Prostate gland (tissue), 2 donors: ENCODE measurements at regions of chr11 and their contacts with region 1.

Region 1: DNA sequence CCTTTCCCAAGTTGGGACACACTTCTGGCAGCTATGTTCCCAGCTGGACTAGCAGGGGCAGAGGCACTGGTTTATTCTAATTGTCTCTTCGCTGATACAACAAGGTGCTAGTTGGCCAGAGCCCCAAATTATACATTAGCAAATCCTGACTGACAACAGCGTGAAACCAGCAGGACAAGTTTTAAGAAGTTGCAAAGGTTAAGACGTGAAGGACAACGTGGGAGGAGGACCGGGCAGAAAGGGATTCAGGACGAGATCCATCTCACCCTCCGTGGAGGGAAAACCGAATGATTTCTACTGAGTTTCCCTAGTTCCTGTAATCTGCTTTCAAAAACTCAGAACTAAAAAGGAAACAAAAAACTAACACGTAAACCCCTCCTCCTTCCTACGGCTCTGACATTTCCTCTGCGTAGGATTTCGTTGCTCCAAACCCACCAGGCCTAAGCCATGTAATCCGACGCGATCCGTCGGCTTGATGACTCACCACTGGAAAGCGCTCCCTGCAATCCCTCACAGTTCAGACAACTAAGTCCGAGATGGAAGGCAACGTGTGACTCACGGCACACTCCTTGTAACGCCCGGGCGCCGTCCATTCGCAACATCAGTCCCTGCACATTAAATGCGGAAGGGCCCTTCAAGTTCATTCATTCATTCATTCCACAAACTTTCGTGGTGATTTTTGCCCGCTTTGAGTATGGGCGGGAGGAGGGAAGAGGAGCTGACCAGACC is 703 bp downstream of the POGLUT3 start:
- DNase-seq: peak; percentile 86
- H3K4me3 ChIP-seq: peak overlapping the region; percentile 68 to 74
- H3K27ac ChIP-seq: peak overlapping the region; percentile 95
- H3K4me1 ChIP-seq: no peaks in the 10 kb centered on the region
- H3K27me3 ChIP-seq: no peaks in the 10 kb centered on the region
- CTCF ChIP-seq: no peak
- POLR2A ChIP-seq: peak; percentile 73

Region 2: DNA sequence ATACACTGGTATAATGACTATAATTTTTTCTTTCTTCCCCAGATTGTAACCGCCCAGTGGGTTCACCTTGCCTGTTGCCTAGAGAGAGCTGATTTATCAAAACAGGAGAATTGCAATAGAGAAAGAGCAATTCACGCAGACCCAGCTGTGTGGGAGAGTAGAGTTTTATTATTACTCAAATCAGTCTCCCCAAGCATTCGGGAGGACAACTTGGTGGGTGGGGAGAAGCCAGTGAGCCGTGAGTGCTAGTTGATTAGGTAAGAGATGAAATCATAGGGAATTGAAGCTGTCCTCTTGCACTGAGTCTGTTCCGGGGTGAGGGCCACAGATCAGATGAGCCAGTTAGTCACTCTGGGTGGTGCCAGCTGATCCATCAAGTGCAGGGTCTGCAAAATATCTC is 712.1 kb before region 1 on chr11:
- intact Hi-C with region 1: no loop called
- DNase-seq: no peak
- H3K4me3 ChIP-seq: no peak overlapping the region
- H3K27ac ChIP-seq: no peak overlapping the region
- H3K4me1 ChIP-seq: no peaks in the 10 kb centered on the region
- H3K27me3 ChIP-seq: no peaks in the 10 kb centered on the region
- CTCF ChIP-seq: no peak
- POLR2A ChIP-seq: no peak

Region 3: DNA sequence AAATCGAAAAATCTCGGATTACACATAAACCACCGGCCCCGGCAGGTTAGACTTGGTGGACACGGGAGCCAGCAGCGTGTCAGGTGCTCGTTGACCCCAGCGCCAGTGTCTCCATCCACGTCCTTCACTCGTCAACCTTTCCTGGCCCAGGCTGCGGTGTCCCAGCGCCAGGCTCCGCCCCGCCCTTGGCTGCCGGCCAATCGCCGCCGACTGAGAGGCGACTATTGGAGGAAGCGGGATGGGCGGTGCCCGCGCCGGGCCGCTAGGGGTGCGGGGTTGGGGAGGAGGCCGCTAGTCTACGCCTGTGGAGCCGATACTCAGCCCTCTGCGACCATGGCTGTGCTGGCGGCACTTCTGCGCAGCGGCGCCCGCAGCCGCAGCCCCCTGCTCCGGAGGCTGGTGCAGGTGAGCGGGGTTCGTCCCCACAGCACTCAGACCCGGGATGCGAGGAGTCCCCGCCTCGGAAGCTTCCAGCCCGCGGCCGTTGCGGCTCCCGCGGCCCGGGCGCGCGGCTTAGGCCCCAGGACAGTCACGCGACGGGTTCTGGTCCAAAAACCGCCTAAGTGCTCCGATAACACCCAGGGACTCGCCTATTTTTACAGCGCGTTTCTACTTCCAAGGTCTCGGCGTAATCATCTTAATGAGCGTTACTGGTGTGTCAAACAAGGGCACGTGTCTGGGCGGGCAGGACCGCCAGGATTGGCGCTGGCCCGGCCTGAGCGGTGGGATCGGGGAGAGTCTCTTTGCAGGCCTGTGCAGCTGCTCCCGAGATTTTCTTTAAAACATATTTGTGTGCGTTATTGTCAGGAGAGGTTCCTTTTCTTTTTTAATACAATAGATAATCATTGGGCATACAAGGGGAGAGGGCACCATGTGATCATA is 376.0 kb before region 1 on chr11 and contains the start of gene ACAT1:
- intact Hi-C with region 1: loop called (anchors 10 kb)
- DNase-seq: peak; percentile 94
- H3K4me3 ChIP-seq: peak within 1 kb of the TSS; percentile 69 to 73
- H3K27ac ChIP-seq: peak within 1 kb of the TSS; percentile 87 to 89
- H3K4me1 ChIP-seq: peaks cover 4% of the 10 kb centered on the region
- H3K27me3 ChIP-seq: no peaks in the 10 kb centered on the region
- CTCF ChIP-seq: peak in 3 of 4 experiments; percentile 40 to 76 (median 69)
- POLR2A ChIP-seq: peak; percentile 70
- total RNA-seq, gene ACAT1: 65.1 to 152 TPM

Region 4: GRCh38 chr11:108222686-108223448 is 274.6 kb before region 1 on chr11 and contains the start of gene ATM:
- intact Hi-C with region 1: loop called (anchors 10 kb)
- DNase-seq: peak; percentile 99
- H3K4me3 ChIP-seq: peak within 1 kb of the TSS; percentile 69 to 76
- H3K27ac ChIP-seq: peak within 1 kb of the TSS; percentile 89 to 97
- H3K4me1 ChIP-seq: no peaks in the 10 kb centered on the region
- H3K27me3 ChIP-seq: no peaks in the 10 kb centered on the region
- CTCF ChIP-seq: peak; percentile 58 to 91 (median 77)
- POLR2A ChIP-seq: peak; percentile 6
- total RNA-seq, gene ATM: 32.9 to 80.9 TPM

Region 5: DNA sequence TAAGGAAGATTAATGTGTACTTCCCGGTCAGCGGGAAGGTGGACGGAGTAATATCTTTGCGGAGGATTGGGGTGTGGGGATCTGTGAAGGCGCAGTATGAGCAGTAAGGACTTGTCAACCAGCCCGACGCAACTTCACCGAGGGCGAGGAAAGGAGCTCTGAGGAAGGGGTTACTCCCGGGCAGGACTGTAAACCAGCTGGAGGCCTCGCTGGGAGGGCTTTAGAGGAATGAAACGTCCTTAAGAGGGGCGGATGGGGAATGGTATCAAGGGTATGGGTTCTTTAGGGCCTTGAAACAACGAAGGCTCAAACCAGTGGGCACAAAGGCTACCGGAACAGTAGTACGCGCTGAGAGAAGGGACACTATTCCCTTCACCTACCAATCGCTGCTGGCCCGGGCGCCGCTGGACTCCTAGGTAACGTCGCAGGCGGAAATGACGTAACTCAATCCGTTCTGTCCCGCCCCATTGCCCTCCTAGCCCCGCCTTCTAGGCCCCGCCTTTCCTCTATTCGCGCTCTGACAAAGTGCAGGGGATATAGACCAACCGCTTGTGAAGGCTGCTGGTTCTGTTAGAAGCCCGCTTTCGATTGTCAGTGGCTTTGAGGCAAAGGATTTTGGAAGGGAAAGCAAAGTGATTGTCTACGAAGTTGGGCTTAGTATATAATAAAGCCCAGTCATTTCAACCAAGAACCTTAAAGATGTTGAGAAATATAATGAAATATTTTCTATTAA is 30.2 kb before region 1 on chr11 and contains the start of gene C11orf65:
- intact Hi-C with region 1: loop called (anchors 2 kb)
- DNase-seq: peak; percentile 97
- H3K4me3 ChIP-seq: peak within 1 kb of the TSS; percentile 52 to 65
- H3K27ac ChIP-seq: peak within 1 kb of the TSS; percentile 99
- H3K4me1 ChIP-seq: no peaks in the 10 kb centered on the region
- H3K27me3 ChIP-seq: no peaks in the 10 kb centered on the region
- CTCF ChIP-seq: no peak
- POLR2A ChIP-seq: peak; percentile 98
- total RNA-seq, gene C11orf65: 0.18 to 4.3 TPM

Region 6: DNA sequence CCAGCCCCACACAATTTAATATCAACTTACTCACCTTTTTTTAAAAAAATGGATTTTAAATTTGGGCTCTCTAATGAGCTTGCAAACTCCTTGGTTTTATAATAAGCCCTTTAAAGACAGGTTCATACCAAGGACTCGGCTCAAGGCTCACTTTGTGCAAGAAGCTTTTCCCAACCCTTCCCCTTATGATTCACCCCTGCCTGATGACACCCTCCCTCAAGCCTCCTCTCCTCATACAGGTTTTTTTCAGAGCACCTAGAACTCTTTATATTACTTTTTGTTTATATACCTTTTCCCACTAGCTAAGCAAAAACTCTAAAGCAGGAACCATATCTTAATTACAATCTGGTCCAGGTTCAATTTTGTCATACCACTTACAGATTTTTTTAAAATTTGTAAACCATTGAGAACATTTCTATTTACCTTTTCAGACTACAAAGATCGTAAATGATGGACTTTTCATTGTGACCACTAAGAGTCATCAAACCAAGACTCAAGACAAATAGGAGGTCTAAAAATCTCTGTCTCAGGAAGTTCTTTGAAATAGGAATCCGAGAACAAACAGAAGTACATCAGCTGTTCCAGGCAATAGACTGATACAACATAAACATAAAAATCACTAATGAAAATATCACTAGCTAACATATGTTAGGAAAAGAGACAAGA is 109.1 kb after region 1 on chr11:
- intact Hi-C with region 1: no loop called
- DNase-seq: no peak
- H3K4me3 ChIP-seq: no peak overlapping the region
- H3K27ac ChIP-seq: no peak overlapping the region
- H3K4me1 ChIP-seq: no peaks in the 10 kb centered on the region
- H3K27me3 ChIP-seq: no peaks in the 10 kb centered on the region
- CTCF ChIP-seq: no peak
- POLR2A ChIP-seq: no peak

Region 7: GRCh38 chr11:108664730-108665525 is 167.4 kb after region 1 on chr11 and contains the start of gene DDX10:
- intact Hi-C with region 1: loop called (anchors 10 kb)
- DNase-seq: peak; percentile 97
- H3K4me3 ChIP-seq: peak within 1 kb of the TSS; percentile 80 to 91
- H3K27ac ChIP-seq: peak within 1 kb of the TSS; percentile 59 to 72
- H3K4me1 ChIP-seq: peaks cover 6% of the 10 kb centered on the region
- H3K27me3 ChIP-seq: no peaks in the 10 kb centered on the region
- CTCF ChIP-seq: peak in 2 of 4 experiments; percentile 18 to 28
- POLR2A ChIP-seq: peak; percentile 17
- total RNA-seq, gene DDX10: 18.5 to 33.1 TPM

Region 8: DNA sequence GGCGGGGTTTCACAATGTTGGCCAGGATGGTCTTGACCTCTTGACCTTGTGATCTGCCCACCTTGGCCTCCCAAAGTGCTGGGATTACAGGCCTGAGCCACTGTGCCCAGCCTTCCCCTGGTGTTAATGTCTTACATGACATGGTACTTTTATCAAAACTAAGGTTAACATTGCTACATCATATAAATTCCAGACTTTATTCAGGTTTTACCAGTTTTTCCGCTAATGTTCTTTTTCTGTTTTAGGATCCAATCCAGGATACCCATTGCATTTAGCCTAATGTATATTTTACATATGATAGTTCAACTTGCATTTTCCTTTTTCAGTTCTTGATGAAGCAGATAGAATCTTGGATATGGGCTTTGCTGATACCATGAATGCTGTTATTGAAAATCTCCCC is 181.6 kb after region 1 on chr11:
- intact Hi-C with region 1: no loop called
- DNase-seq: no peak
- H3K4me3 ChIP-seq: no peak overlapping the region
- H3K27ac ChIP-seq: no peak overlapping the region
- H3K4me1 ChIP-seq: no peaks in the 10 kb centered on the region
- H3K27me3 ChIP-seq: no peaks in the 10 kb centered on the region
- CTCF ChIP-seq: no peak
- POLR2A ChIP-seq: no peak